Left colon (tissue), 2 donors: ENCODE measurements at regions of chr2 and their contacts with region 1.

Region 1: GRCh38 chr2:236180831-236181453 is 12.8 kb upstream of the GBX2 start:
- DNase-seq: peak in 1 of 2 donors; percentile 65
- ATAC-seq: peak; percentile 46

Region 2: DNA sequence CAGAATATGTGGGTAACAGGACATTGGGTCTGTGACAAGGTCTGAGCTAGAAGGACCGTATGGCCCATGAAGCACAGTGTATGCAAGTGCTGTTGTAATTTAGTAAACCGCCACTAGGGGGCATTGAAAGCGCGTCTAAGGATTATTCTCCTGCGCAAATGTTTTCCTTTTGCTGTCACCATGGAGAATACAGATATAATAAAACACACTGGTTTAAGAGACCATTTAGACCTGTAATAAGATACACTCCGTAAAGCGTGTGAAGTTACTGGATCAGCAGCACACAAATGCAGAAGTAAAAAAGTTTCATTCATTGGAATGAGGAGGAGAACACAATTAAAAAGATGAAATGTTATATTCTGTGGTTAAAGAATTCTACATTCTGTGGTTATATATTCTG is 414.7 kb before region 1 on chr2:
- intact Hi-C with region 1: loop called (anchors 5 to 10 kb)
- DNase-seq: peak in 1 of 2 donors; percentile 66
- ATAC-seq: peak; percentile 90

Region 3: DNA sequence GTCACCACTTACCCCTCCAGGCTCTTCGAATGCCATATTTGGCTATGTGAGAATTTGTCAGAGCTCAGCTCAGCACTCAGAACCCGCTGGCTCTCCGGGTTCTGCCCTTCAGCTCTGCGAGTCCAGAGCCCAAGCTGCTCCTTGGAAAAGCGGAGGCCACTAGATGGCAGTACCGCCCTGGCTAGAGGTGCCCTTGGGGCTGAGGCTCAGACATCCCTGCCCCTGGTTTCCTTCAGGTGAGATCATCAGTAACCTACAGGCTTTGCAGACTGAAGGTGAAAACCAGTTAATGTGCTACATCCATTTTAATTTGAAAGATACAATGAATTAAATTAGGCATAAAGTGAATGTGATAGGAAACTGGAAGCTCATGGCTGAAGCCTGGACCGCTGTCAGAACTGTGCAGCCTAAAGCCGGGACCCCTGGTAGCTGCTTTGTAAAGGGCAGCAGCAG is 401.5 kb before region 1 on chr2:
- intact Hi-C with region 1: loop called (anchors 5 to 10 kb)
- DNase-seq: peak; percentile 49 to 87
- ATAC-seq: peak; percentile 92